ENCODE measurements at regions of chr18 and their contacts with region 1.

Region 1: GRCh38 chr18:49858309-49859020 is 45.1 kb upstream of the ACAA2 start:
- DNase-seq: peak; percentile 78 to 80 (median 79)
- ATAC-seq: peak; percentile 79
- H3K4me3 ChIP-seq: no peak overlapping the region
- H3K27ac ChIP-seq: peak overlapping the region; percentile 65 to 83 (median 75)
- H3K4me1 ChIP-seq: peaks cover 21% of the 10 kb centered on the region
- H3K27me3 ChIP-seq: no peaks in the 10 kb centered on the region
- CTCF ChIP-seq: peak; percentile 88 to 95 (median 92)
- POLR2A ChIP-seq: no peak

Region 2: GRCh38 chr18:49561289-49562193 is 296.9 kb before region 1 on chr18 and contains the start of gene LIPG:
- intact Hi-C with region 1: loop called (anchors 10 kb)
- DNase-seq: peak; percentile 33 to 59 (median 46)
- ATAC-seq: peak; percentile 72
- H3K4me3 ChIP-seq: peak within 1 kb of the TSS in 1 of 2 donors; percentile 3
- H3K27ac ChIP-seq: no peak within 1 kb of the TSS
- H3K4me1 ChIP-seq: peaks cover 49% of the 10 kb centered on the region
- H3K27me3 ChIP-seq: no peaks in the 10 kb centered on the region
- CTCF ChIP-seq: no peak
- POLR2A ChIP-seq: peak in 1 of 3 donors; percentile 35
- total RNA-seq, gene LIPG: 0.52 to 0.66 TPM

Measured in body of pancreas (tissue), 4 donors.